ENCODE measurements at regions of chr7 and their contacts with region 1.

Region 1: DNA sequence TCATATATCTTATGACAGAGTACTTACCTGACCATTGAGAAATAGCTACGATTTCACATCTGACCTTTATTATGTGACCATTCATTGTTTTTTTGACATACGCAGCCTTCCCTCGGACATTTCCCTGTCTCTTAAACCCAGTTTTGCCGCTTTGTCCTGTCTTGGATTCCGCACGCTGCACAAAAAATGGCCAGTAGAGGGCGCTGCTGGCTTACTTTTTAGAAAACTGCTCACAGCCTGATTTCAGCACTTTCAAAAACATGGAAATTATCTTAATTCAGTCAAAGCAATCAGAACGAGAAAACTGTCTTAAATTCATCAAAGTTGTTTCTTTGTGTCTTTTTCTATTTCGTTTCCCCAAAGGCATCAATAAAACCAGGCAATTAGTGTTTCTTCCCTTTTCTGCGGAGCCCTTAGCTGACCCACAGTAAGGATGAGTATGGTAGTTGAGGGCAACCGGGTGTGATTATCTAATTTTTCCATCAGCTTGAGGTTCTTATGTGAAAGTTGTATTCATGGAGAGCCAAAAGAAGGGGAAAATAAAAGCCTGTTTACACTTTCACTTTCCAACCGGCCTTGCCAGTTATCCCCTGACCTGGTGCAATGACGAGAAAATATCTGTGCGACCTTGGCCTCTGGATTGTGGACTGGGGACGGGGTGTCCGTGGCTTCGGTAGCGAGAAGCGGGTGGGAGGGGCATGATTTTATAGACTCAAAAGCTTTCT is 144.4 kb downstream of the DYNC1I1 start:
- DNase-seq: peak; percentile 70
- H3K4me3 ChIP-seq: no peak overlapping the region
- H3K27ac ChIP-seq: no peak overlapping the region
- H3K4me1 ChIP-seq: no peaks in the 10 kb centered on the region
- CTCF ChIP-seq: peak; percentile 98

Region 2: GRCh38 chr7:96414931-96415292 is 498.2 kb after region 1 on chr7:
- CTCF ChIA-PET with region 1: no interaction called
- POLR2A ChIA-PET with region 1: no interaction called
- intact Hi-C with region 1: loop called (anchors 10 kb)
- DNase-seq: peak; percentile 53
- H3K4me3 ChIP-seq: no peak overlapping the region
- H3K27ac ChIP-seq: no peak overlapping the region
- H3K4me1 ChIP-seq: peaks cover 18% of the 10 kb centered on the region
- CTCF ChIP-seq: peak; percentile 79

Region 3: DNA sequence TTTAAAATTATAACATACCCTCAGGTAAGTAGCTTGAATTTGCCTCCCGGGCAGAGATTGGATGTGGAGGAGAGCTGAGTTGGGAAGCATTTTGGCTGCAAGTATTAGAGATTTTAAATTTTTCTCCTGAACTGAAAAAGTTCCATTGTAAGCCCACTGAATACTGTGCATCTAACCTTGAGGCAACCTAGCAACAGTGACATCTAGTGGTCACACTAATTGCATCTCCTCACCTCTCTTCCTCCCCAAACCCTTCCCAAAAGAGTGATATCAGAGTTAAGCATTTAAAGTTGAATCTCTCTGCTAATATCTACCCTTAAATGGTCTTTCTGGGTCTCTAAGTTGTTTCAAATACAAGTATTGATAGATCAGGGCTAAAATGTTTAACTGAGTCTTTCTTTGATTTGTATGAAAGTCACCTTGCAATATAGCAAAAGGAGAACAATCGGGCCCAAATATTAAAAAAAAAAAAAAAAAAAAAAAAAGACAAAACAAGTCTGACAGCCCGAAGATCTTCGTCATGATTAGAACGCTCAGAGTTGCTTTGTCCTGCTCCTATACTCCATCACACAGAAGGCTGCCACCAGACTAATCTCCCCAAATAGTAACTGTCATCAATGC is 1148.3 kb after region 1 on chr7:
- CTCF ChIA-PET with region 1: no interaction called
- POLR2A ChIA-PET with region 1: no interaction called
- intact Hi-C with region 1: loop called (anchors 5 kb)
- DNase-seq: peak; percentile 55
- H3K4me3 ChIP-seq: no peak overlapping the region
- H3K27ac ChIP-seq: no peak overlapping the region
- H3K4me1 ChIP-seq: no peaks in the 10 kb centered on the region
- CTCF ChIP-seq: peak; percentile 88